Right ventricle myocardium superior (tissue), 1 donor: ENCODE measurements at regions of chr13 and their contacts with region 1.

Region 1: DNA sequence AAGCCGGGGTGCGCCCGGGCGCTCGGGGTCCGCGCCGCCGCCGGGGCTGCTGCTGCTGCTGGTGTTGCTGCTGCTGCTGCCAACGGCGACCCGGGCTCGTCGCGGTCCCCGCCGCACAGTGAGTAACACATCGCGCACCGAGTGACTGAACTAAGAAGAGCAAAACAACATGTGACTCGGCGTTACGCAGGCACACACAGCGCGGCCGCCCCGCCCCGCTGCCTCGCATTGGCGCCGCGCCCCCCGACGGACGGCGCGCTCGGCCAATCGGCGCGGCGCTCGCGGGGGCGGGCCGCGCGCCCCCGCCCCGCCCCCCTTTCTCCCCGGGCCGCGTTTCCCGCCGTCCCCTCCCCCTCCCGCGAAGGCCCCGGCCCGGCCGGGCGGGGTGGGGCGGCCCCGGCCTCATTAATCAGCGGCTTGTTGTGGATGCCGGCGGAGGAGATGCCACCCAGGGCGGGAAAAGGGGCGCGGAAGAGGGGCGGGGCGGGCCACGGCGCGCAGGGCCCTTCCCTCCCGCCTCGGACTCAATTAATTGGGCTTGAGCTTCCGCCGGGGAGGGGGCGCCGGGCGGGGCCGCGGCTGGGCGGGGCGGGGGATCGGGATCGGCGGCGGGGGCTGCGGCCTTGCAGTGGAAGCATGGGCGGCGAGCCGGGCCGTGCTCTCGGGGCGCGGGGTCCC is at the start of gene IRS2:
- DNase-seq: peak; percentile 95
- ATAC-seq: peak; percentile 82
- total RNA-seq, gene IRS2: 12.1 TPM

Region 2: GRCh38 chr13:108961542-108962125 is 825.0 kb before region 1 on chr13:
- intact Hi-C with region 1: loop called (anchors 10 kb)
- DNase-seq: no peak
- ATAC-seq: peak; percentile 94

Region 3: GRCh38 chr13:109610517-109610916 is 176.1 kb before region 1 on chr13:
- intact Hi-C with region 1: loop called (anchors 10 kb)
- DNase-seq: peak; percentile 70
- ATAC-seq: peak; percentile 85

Region 4: DNA sequence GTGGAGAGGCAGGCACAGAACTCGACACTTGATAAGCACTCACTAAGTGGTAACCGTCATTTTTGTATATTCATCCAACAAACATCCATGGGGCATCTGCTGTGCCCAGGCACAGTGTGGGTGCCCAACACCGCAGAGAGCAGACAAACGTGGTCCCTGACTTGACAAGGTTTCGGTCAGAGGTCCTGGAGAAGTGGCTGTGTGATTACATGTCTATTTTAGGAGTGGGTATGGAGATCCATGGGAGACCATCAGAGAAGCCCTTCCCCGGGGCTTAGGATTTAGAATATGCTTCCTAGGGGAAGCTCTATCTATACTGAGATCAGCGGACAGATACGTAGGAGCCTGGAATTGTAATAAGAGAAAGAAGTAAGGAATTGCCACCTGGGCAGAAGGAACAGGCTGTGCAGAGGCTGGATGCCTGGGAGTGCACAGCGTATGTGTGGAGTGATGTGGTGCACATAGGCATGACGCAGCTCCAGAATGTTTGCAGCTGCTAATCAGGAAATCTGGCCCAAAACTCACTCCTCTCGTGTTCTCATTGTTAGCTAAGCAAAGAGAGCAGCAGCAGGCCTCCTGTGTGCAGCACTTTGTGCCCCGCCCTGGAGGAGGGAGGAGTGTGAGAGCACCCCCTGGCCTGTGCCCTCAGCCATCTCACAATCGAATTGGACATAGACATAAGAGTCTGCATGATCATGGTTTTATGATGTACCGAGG is 22.8 kb after region 1 on chr13:
- intact Hi-C with region 1: no loop called
- DNase-seq: no peak
- ATAC-seq: no peak

Region 5: GRCh38 chr13:109904218-109904617 is 117.6 kb after region 1 on chr13:
- intact Hi-C with region 1: no loop called
- DNase-seq: no peak
- ATAC-seq: no peak